Body of pancreas (tissue), 4 donors: ENCODE measurements at regions of chr6 and their contacts with region 1.

Region 1: GRCh38 chr6:31079656-31080261 is 32.6 kb downstream of the C6orf15 start:
- DNase-seq: peak; percentile 71 to 78 (median 74)
- ATAC-seq: peak; percentile 86
- H3K4me3 ChIP-seq: no peak overlapping the region
- H3K27ac ChIP-seq: no peak overlapping the region
- H3K4me1 ChIP-seq: no peaks in the 10 kb centered on the region
- H3K27me3 ChIP-seq: no peaks in the 10 kb centered on the region
- CTCF ChIP-seq: peak; percentile 65 to 82 (median 76)
- POLR2A ChIP-seq: no peak

Region 2: DNA sequence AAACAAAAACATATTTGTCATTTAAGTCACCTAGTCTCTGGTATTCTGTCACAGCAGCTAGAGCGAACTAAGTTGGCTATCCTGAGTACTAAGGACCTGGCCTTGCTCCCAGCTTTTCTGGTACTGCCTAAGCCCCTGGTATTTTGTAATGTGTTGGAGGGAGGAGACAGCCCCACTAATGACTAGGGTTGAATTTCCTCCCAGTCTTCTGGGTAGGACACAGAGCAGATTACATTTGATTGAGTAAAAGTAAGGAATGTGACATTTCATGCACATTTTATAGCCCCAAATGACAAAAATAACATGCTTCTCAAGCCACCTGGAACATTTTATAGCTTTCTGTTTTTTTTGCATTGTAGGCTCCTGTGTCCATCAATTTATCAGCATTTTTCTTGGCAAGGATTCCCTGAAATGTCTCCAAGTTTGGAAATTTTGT is 243.3 kb before region 1 on chr6:
- intact Hi-C with region 1: loop called (anchors 10 kb)
- DNase-seq: peak in 3 of 4 donors; percentile 46 to 53 (median 50)
- ATAC-seq: peak; percentile 64
- H3K4me3 ChIP-seq: no peak overlapping the region
- H3K27ac ChIP-seq: peak overlapping the region in 1 of 4 donors; percentile 10
- H3K4me1 ChIP-seq: peaks cover 2% of the 10 kb centered on the region
- H3K27me3 ChIP-seq: no peaks in the 10 kb centered on the region
- CTCF ChIP-seq: no peak
- POLR2A ChIP-seq: no peak

Region 3: DNA sequence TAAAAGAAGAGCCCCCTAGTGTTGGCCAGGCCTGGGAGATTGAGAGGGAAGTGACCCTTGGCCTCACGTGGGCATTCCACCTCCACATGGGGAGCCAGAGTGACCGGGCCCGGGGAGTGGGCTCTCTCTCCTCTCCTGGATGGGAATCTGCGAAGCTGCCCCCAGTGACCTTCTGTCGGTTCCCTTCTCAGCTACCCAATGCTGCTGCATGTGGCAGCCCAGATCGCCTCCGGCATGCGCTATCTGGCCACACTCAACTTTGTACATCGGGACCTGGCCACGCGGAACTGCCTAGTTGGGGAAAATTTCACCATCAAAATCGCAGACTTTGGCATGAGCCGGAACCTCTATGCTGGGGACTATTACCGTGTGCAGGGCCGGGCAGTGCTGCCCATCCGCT is 181.9 kb before region 1 on chr6:
- intact Hi-C with region 1: no loop called
- DNase-seq: no peak
- ATAC-seq: no peak
- H3K4me3 ChIP-seq: no peak overlapping the region
- H3K27ac ChIP-seq: no peak overlapping the region
- H3K4me1 ChIP-seq: no peaks in the 10 kb centered on the region
- H3K27me3 ChIP-seq: no peaks in the 10 kb centered on the region
- CTCF ChIP-seq: no peak
- POLR2A ChIP-seq: no peak